Right lobe of liver (tissue), 6 donors: ENCODE measurements at regions of chr6 and their contacts with region 1.

Region 1: DNA sequence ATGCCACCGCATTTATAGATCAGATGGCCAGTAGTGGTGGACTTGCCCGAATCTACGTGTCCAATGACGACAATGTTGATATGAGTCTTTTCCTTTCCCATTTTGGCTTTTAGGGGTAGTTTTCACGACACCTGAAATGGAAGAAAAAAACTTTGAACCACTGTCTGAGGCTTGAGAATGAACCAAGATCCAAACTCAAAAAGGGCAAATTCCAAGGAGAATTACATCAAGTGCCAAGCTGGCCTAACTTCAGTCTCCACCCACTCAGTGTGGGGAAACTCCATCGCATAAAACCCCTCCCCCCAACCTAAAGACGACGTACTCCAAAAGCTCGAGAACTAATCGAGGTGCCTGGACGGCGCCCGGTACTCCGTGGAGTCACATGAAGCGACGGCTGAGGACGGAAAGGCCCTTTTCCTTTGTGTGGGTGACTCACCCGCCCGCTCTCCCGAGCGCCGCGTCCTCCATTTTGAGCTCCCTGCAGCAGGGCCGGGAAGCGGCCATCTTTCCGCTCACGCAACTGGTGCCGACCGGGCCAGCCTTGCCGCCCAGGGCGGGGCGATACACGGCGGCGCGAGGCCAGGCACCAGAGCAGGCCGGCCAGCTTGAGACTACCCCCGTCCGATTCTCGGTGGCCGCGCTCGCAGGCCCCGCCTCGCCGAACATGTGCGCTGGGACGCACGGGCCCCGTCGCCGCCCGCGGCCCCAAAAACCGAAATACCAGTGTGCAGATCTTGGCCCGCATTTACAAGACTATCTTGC is 725 bp downstream of the EEF1A1 start:
- DNase-seq: peak; percentile 74 to 83 (median 77)
- ATAC-seq: peak; percentile 7 to 52 (median 42)
- H3K4me3 ChIP-seq: peak overlapping the region; percentile 92 to 95 (median 93)
- H3K27ac ChIP-seq: peak overlapping the region; percentile 99
- H3K4me1 ChIP-seq: peaks cover 0 to 42% (median 8%) of the 10 kb centered on the region in 4 donors
- H3K27me3 ChIP-seq: no peaks in the 10 kb centered on the region
- CTCF ChIP-seq: no peak
- POLR2A ChIP-seq: no peak

Region 2: GRCh38 chr6:73610444-73611275 is 90.6 kb after region 1 on chr6:
- intact Hi-C with region 1: loop called in 1 of 2 experiments (anchors 10 kb)
- DNase-seq: no peak
- ATAC-seq: peak; percentile 78 to 87 (median 82)
- H3K4me3 ChIP-seq: no peak overlapping the region
- H3K27ac ChIP-seq: no peak overlapping the region
- H3K4me1 ChIP-seq: peaks cover 0 to 12% (median 0%) of the 10 kb centered on the region in 4 donors
- H3K27me3 ChIP-seq: no peaks in the 10 kb centered on the region
- CTCF ChIP-seq: peak; percentile 61 to 75 (median 72)
- POLR2A ChIP-seq: no peak

Region 3: DNA sequence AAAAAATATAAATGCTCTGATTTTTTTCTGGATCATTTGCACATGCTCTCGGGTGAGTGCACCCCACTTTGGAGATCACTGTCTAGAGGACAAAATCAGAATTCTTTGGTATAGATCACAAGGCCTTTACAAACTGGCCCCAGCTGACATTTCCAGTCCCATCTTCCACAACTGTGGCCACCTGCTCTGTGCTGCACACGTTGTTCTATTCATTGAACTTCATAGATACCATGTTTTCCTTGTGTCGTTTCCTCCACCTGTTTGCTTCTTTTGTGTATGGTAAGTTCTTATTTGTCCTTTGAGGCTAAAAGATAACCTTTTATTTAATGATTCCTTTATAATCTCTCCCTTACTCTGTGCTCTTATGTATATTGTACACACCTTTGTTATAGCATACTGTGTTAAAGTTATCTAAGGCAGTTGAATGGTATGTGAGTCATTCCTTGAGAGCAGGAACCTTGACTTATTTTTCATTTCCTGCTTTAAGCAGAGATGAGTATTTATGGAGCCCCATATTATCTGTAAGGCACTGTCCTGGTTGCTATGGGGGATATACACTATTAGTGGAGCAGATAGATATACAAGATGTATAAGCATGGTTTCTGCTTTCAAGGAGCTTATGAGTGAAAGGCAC is 145.7 kb after region 1 on chr6:
- intact Hi-C with region 1: no loop called
- DNase-seq: no peak
- ATAC-seq: no peak
- H3K4me3 ChIP-seq: no peak overlapping the region
- H3K27ac ChIP-seq: no peak overlapping the region
- H3K4me1 ChIP-seq: no peaks in the 10 kb centered on the region
- H3K27me3 ChIP-seq: no peaks in the 10 kb centered on the region
- CTCF ChIP-seq: no peak
- POLR2A ChIP-seq: no peak